GM18951 (cell line): ENCODE measurements at regions of chr6 and their contacts with region 1.

Region 1: GRCh38 chr6:12369781-12370262 is 79.7 kb downstream of the EDN1 start:
- POLR2A ChIP-seq: no peak

Region 2: DNA sequence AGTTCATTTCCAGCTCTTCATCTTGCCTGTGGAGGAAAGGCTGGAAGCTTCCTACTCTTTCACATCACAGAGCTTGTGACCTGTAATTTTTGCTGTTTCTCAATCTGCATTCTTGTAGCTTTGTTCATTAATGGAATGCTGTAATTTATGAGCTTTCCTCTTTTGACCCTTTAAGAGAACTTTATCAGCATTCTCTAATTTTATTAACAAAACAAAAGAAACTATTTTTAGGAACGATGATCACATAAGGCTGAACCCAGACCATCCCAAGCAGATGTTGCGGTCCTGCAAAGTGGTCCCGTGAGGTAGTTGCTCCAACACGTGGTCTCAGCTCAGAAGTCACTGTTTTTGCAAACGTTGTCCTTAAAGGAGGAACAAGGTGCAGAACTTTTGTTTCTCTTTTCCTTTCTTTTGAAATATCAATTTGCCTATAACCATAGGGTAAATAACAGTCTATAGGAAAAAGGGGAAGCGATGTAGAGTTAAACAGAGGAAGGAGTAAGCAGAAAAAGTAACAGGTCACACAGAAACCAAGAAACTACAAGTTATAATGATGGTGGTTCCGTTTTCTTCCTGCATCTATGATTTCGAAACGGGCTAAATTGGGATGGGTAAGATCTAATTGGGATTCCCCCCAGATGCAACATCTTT is 225.5 kb after region 1 on chr6:
- in situ Hi-C with region 1: loop called (anchors 10 kb)
- POLR2A ChIP-seq: no peak